GM10248 (cell line): ENCODE measurements at regions of chr16 and their contacts with region 1.

Region 1: GRCh38 chr16:70324998-70325747 is 21.5 kb upstream of the DDX19A start:
- DNase-seq: no peak
- CTCF ChIP-seq: no peak

Region 2: GRCh38 chr16:70290949-70291519 is 34.1 kb before region 1 on chr16:
- CTCF ChIA-PET with region 1: no interaction called
- POLR2A ChIA-PET with region 1: no interaction called
- DNase-seq: no peak
- CTCF ChIP-seq: no peak

Region 3: GRCh38 chr16:70306880-70307279 is 18.3 kb before region 1 on chr16:
- CTCF ChIA-PET with region 1: interaction called, 11 read pairs
- POLR2A ChIA-PET with region 1: no interaction called
- DNase-seq: no peak
- CTCF ChIP-seq: no peak